IMR-90 (cell line): ENCODE measurements at regions of chr14 and their contacts with region 1.

Region 1: DNA sequence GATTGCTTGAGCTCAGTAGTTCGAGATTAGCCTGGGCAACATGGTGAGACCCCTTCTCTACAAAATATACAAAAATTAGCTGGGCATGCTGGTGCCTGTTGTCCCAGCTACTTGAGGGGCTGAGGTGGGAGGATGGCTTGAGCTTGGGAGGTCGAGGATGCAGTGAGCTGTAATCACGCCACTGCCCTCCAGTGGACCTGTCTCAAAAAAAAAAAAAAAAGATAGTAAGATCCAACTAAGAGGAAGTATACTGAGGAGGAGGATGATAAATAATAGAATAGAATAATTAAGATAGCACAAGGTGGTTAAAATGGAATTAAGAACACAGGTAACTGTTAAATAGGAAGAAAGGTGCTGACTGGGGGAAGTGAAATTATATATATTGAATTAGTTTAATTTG is 37.0 kb upstream of the BAZ1A start:
- DNase-seq: no peak
- ATAC-seq: 0 out of 2 replicates have a peak, but pooled peaks have one; percentile 24
- H3K4me3 ChIP-seq: no peak overlapping the region
- H3K27ac ChIP-seq: no peak overlapping the region
- H3K4me1 ChIP-seq: peaks cover 3% of the 10 kb centered on the region
- H3K27me3 ChIP-seq: no peaks in the 10 kb centered on the region
- CTCF ChIP-seq: no peak
- POLR2A ChIP-seq: no peak
- RAD21 ChIP-seq: no peak

Region 2: DNA sequence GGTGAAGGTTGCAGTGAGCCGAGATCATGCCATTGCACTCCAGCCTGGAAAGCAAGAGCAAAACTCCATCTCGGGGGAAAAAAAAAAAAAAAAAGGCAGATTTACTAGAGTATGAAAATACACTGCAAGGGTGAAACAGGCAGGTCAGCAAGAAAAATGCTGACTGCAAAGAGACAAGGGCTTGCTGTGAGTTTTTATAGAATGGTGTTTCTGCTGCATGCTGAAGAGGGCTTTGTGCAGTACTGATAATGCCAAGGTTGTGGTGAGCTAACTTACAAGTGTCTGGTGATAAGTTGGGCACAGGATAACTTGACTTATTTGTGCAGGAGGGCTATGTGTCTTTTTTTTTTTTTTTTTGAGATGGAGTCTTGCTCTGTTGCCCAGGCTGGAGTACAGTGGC is 44.8 kb after region 1 on chr14:
- CTCF ChIA-PET with region 1: no interaction called
- POLR2A ChIA-PET with region 1: interaction called, 15 read pairs
- dilution Hi-C with region 1: no loop called
- in situ Hi-C with region 1: no loop called
- intact Hi-C with region 1: no loop called
- DNase-seq: no peak
- ATAC-seq: no peak
- H3K4me3 ChIP-seq: no peak overlapping the region
- H3K27ac ChIP-seq: no peak overlapping the region
- H3K4me1 ChIP-seq: no peaks in the 10 kb centered on the region
- H3K27me3 ChIP-seq: no peaks in the 10 kb centered on the region
- CTCF ChIP-seq: no peak
- POLR2A ChIP-seq: no peak
- RAD21 ChIP-seq: no peak

Region 3: DNA sequence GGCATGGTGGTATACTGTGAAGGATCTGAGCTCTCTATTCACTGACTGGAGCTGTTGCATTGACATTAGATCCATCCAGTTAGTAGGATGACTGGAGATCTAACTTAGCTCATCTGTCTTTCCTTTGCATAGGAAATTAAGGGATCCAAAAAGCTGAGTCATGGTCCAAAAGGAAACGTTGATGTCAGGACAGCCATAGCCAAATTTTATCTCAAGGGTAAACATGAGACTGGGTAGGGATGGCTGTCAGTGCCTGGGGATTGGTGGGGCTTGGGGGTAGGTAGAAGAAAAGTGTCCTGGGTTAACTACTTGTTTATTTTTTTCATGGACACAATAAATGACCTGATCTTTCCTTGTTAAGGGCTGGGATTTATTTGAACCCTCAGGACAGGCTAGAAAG is 138.5 kb after region 1 on chr14:
- CTCF ChIA-PET with region 1: no interaction called
- POLR2A ChIA-PET with region 1: no interaction called
- dilution Hi-C with region 1: no loop called
- in situ Hi-C with region 1: no loop called
- intact Hi-C with region 1: no loop called
- DNase-seq: peak; percentile 72
- ATAC-seq: peak; percentile 3; the same call in 1 of the 2 replicates
- H3K4me3 ChIP-seq: no peak overlapping the region
- H3K27ac ChIP-seq: peak overlapping the region; percentile 63; the same call in 1 of the 2 replicates
- H3K4me1 ChIP-seq: peaks cover 2% of the 10 kb centered on the region; the same call in 1 of the 2 replicates
- H3K27me3 ChIP-seq: no peaks in the 10 kb centered on the region
- CTCF ChIP-seq: no peak
- POLR2A ChIP-seq: no peak
- RAD21 ChIP-seq: no peak

Region 4: DNA sequence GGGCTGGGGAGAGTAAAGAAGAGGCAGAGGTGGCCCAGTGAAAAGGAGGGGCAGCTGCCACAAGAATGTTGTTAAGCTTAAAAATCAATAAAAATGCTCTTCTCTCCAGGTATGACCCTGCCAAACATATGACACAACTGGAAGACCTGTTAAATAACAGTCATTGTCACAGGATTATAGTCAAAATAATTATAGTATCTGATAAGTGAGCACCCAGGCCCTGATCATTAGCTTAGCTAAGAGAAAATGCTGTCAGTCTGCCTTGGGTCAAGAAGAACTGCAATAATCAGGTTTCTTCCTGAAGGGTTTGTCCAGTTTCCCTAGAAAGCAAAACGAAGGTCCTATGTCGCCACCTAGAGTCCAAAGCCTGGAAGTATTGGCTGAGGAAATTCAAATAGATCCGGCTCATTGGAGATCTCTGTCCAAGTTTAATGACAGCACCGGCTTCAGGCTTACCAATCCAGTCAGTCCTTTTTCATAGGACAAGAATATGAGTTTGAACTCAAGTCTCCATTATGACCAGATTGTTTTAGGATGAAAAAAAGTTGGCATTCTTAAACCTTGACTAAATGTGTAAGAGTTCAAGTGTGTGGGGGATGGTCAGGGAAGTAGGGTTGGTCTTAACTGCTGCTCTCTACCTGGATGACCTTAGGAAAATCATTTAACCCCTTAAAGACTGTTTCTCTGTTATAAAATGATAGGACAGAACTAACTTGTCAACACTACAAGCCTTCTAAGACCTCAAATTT is 1692.8 kb after region 1 on chr14:
- CTCF ChIA-PET with region 1: no interaction called
- POLR2A ChIA-PET with region 1: no interaction called
- dilution Hi-C with region 1: no loop called
- in situ Hi-C with region 1: no loop called
- intact Hi-C with region 1: no loop called
- DNase-seq: peak; percentile 66
- ATAC-seq: peak; percentile 64
- H3K4me3 ChIP-seq: no peak overlapping the region
- H3K27ac ChIP-seq: no peak overlapping the region
- H3K4me1 ChIP-seq: no peaks in the 10 kb centered on the region
- H3K27me3 ChIP-seq: peaks cover 2% of the 10 kb centered on the region
- CTCF ChIP-seq: peak; percentile 70
- POLR2A ChIP-seq: no peak
- RAD21 ChIP-seq: peak; percentile 65